Panc1 (cell line): ENCODE measurements at regions of chr14 and their contacts with region 1.

Region 1: DNA sequence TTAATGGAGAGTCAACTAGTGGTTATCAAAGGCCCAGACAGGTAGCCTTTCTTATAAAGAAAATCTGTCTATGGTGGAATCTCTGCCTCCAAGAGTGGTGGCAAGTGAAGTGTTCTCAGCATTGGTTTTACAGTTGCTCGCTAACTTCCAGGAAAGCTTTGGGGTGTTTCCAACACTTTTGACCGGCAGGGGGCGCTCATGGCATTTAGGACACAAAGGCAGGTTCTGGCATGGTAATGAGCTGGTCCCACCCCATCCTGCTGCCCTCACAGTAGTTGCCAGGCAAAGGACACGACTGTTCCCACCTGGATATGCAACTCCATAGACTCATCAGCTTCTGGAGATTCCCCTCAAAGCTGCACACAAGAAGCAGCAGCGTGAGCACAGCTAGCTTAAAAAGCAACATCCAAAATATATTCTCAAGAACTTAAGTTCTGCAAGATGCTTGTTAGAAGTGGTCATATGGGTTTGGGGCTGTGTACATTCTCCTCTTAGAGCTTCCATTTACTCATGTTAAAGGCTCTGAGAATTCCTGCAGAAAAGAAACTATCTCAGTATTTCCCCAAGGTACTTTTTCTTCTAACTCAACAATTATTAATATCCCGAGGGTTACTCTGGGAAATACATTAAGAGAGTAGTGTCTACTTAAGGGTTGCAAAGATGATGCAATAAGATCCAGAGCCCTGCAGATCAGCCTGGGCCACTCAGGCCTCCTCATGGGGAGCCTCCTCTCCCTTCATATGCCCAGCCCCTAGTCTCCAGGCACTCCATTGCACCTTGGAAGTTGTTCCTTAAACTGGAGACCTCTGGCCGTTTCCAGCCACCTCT is 14.8 kb downstream of the PROX2 start:
- DNase-seq: peak; percentile 55
- ATAC-seq: peak; percentile 88
- H3K4me3 ChIP-seq: no peak overlapping the region
- H3K27ac ChIP-seq: no peak overlapping the region
- H3K4me1 ChIP-seq: no peaks in the 10 kb centered on the region; the same call in 1 of the 2 replicates
- H3K27me3 ChIP-seq: no peaks in the 10 kb centered on the region
- CTCF ChIP-seq: peak; percentile 87

Region 2: DNA sequence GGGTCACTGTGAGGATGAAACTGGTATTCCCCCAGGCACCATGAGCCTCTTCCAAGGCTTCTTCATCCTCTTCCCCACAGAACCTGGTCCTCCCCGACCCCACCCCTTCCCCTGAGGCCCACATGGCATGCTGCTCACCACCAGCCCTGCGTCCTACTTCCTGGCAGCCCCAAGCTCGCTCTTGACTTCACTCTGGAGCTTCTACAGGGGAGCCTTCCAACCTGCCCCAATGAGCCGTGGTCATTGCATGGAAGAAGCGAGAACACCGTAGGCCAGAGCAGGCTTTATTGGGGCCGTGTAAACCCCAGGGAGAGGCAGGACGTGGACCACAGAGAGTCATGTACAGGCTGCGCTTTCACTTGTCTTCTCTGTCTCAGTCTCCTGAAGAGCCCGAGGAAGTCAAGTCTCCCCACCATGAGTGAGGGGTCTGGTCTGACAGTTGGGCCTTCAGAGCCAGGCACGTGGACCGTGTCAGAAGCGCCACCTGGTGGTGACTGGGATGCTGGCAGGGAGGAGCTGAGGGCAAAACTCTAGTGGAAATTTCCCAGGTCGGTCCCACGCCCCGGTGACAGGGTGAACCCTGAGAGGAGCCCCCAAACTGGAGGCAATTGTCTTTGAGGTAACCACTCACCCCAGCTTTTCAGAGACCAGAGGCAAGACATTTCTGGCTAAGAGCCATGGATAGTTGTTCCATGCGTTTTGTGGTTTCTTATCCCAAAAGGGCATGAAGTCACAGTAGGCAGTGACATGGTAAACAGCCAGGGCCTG is 44.4 kb after region 1 on chr14:
- CTCF ChIA-PET with region 1: interaction called, 13 read pairs
- POLR2A ChIA-PET with region 1: no interaction called
- in situ Hi-C with region 1: no loop called
- intact Hi-C with region 1: loop called (anchors 2 kb)
- DNase-seq: no peak
- ATAC-seq: peak; percentile 49
- H3K4me3 ChIP-seq: no peak overlapping the region
- H3K27ac ChIP-seq: no peak overlapping the region
- H3K4me1 ChIP-seq: no peaks in the 10 kb centered on the region
- H3K27me3 ChIP-seq: no peaks in the 10 kb centered on the region
- CTCF ChIP-seq: peak; percentile 91

Region 3: DNA sequence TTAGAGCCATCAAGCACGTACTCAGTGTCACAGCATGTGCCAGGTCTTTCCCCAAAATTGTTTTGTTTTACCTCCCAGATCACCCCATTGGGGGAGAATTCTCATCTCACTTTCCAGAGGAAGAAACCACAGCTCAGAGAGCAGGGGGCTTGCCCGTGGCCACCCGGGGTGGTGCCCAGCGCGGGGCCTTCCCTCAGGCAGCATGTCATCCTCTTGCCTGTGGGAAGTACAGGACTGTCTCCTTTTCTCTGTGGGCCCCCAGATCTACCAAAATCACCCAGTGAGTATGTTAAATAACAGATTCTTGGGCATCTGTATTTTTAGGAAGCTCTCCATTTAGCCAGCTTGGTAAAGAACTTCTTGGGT is 56.0 kb after region 1 on chr14:
- CTCF ChIA-PET with region 1: no interaction called
- POLR2A ChIA-PET with region 1: no interaction called
- in situ Hi-C with region 1: no loop called
- intact Hi-C with region 1: no loop called
- DNase-seq: no peak
- ATAC-seq: no peak
- H3K4me3 ChIP-seq: no peak overlapping the region
- H3K27ac ChIP-seq: no peak overlapping the region
- H3K4me1 ChIP-seq: no peaks in the 10 kb centered on the region
- H3K27me3 ChIP-seq: no peaks in the 10 kb centered on the region
- CTCF ChIP-seq: no peak

Region 4: DNA sequence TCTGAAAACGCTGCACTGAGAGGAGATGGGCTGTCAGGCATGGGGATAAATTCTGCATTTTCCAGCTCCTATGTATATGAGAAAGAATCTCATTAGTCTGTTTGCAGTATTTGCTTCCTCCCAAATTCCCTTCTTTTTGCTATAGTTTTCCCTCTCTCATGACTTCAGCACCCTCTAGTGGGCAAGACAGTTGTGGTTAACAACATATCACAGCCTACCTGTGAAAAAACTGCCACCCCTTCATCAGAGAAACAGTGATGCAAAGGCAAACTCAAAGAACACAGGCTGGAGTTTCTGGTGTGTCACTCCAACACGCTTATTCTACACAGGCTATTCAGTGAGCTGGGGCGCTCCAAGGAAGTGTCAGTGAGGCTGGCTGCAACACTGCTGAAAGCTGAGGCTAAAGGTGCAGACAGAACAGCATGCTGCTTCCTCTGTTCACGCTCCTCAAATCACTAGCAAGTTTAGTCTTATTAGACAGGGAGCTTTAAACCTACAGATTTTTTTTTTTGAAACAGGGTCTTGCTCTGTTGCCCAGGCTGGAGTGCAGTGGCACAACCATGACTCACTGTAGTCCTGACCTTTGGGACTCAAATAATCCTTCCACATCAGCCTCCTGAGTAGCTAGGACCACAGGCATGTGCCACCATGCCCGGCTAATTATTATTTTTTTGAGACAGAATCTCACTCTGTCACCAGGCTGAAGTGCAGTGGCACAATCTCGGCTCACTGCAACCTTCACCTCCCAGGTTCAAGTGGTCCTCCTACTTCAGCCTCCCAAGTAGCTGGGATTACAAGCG is 227.7 kb after region 1 on chr14:
- CTCF ChIA-PET with region 1: interaction called, 9 read pairs
- POLR2A ChIA-PET with region 1: no interaction called
- in situ Hi-C with region 1: no loop called
- intact Hi-C with region 1: loop called (anchors 5 kb)
- DNase-seq: peak; percentile 41
- ATAC-seq: peak; percentile 80
- H3K4me3 ChIP-seq: no peak overlapping the region
- H3K27ac ChIP-seq: no peak overlapping the region
- H3K4me1 ChIP-seq: no peaks in the 10 kb centered on the region
- H3K27me3 ChIP-seq: no peaks in the 10 kb centered on the region
- CTCF ChIP-seq: peak; percentile 79

Region 5: GRCh38 chr14:75293920-75294642 is 433.0 kb after region 1 on chr14:
- CTCF ChIA-PET with region 1: no interaction called
- POLR2A ChIA-PET with region 1: no interaction called
- in situ Hi-C with region 1: no loop called
- intact Hi-C with region 1: loop called (anchors 10 kb)
- DNase-seq: no peak
- ATAC-seq: peak; percentile 95
- H3K4me3 ChIP-seq: peak overlapping the region; percentile 65 to 69
- H3K27ac ChIP-seq: no peak overlapping the region; the same call in 1 of the 2 replicates
- H3K4me1 ChIP-seq: no peaks in the 10 kb centered on the region
- H3K27me3 ChIP-seq: no peaks in the 10 kb centered on the region
- CTCF ChIP-seq: no peak